ENCODE measurements at regions of chr7 and their contacts with region 1.

Region 1: GRCh38 chr7:36366718-36367560 is 22.7 kb upstream of the ANLN start:
- DNase-seq: peak; percentile 27
- H3K4me3 ChIP-seq: peak overlapping the region; percentile 84
- H3K27ac ChIP-seq: no peak overlapping the region
- H3K27me3 ChIP-seq: peaks cover 32% of the 10 kb centered on the region
- CTCF ChIP-seq: peak; percentile 76

Region 2: DNA sequence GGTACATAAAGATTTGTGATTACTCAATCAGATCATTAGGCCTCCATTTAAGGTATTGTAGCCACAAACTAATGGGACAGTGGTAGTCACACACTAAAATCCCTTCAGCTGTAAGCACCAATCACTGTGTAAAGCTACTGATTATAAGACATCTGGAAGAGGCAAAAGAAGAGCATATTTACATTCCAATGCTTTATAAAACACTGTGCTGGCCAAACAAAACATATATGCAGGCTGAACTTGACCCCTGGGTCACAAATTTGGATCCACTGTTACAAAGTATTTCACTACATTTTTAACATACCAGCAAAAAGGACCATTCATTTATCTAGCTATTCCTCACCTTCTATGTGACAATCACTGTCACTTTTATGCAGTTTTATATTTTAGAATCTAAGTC is 18.7 kb before region 1 on chr7:
- CTCF ChIA-PET with region 1: interaction called, 59 read pairs
- POLR2A ChIA-PET with region 1: no interaction called
- DNase-seq: peak; percentile 29
- H3K4me3 ChIP-seq: no peak overlapping the region
- H3K27ac ChIP-seq: no peak overlapping the region
- H3K27me3 ChIP-seq: peaks cover 3% of the 10 kb centered on the region
- CTCF ChIP-seq: no peak

Region 3: GRCh38 chr7:36389371-36390198 is 22.6 kb after region 1 on chr7 and contains the start of gene ANLN:
- CTCF ChIA-PET with region 1: interaction called, 31 read pairs
- POLR2A ChIA-PET with region 1: interaction called, 6 read pairs
- DNase-seq: peak; percentile 79
- H3K4me3 ChIP-seq: peak within 1 kb of the TSS; percentile 86
- H3K27ac ChIP-seq: peak within 1 kb of the TSS; percentile 49
- H3K27me3 ChIP-seq: no peaks in the 10 kb centered on the region
- CTCF ChIP-seq: no peak
- polyA plus RNA-seq, gene ANLN: 34.0 and 46.6 TPM in 2 replicates

Region 4: GRCh38 chr7:36598054-36598674 is 231.2 kb after region 1 on chr7:
- CTCF ChIA-PET with region 1: no interaction called
- POLR2A ChIA-PET with region 1: no interaction called
- DNase-seq: no peak
- H3K4me3 ChIP-seq: no peak overlapping the region
- H3K27ac ChIP-seq: no peak overlapping the region
- H3K27me3 ChIP-seq: no peaks in the 10 kb centered on the region
- CTCF ChIP-seq: no peak

Measured in AG04450 (cell line).